Sigmoid colon (tissue), 7 donors: ENCODE measurements at regions of chr3 and their contacts with region 1.

Region 1: GRCh38 chr3:44510000-44510368 is 32.5 kb upstream of the ZNF445 start:
- DNase-seq: no peak
- H3K4me3 ChIP-seq: peak overlapping the region; percentile 81 to 93 (median 90)
- H3K27ac ChIP-seq: peak overlapping the region; percentile 83 to 95 (median 93)
- H3K4me1 ChIP-seq: peaks cover 0 to 23% (median 22%) of the 10 kb centered on the region in 4 donors
- H3K27me3 ChIP-seq: no peaks in the 10 kb centered on the region
- CTCF ChIP-seq: no peak
- EP300 ChIP-seq: no peak
- POLR2A ChIP-seq: no peak

Region 2: DNA sequence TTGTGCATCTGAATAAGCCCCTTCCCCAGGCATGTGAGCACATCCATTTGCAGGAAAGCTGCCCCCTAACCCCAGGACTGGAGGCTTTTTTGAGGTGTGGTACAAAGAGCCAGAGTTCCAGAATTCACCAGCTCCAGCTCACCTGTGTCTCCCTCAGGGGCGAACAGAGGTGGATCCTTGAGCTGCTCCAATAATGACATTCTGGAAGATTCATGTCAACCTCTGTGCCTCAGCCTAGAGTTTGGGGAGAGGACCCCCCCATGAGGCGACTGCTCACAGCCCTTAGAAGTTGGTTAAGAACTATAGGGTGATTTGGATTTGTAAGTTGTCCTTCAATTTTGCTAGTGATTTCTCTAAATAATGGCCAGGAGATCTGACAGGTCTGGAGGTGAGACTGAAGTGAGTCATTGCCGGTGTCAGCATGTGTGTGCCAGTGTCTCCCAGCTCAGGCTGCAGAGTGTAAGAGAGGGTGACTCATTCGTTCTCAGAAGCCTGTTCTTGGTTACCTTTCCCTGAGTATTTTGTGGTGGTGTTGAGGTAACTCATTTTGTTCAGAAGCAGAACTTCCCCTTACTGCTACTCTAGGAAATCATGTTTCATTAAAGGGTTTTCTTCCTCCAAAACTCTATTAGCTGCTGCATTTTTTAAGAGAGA is 405.2 kb before region 1 on chr3:
- intact Hi-C with region 1: no loop called
- DNase-seq: no peak
- H3K4me3 ChIP-seq: no peak overlapping the region
- H3K27ac ChIP-seq: no peak overlapping the region
- H3K4me1 ChIP-seq: no peaks in the 10 kb centered on the region
- H3K27me3 ChIP-seq: peaks cover 0 to 5% (median 0%) of the 10 kb centered on the region in 3 donors
- CTCF ChIP-seq: no peak
- EP300 ChIP-seq: no peak
- POLR2A ChIP-seq: no peak

Region 3: GRCh38 chr3:44323341-44323955 is 186.5 kb before region 1 on chr3:
- intact Hi-C with region 1: loop called (anchors 5 kb)
- DNase-seq: peak; percentile 80
- H3K4me3 ChIP-seq: no peak overlapping the region
- H3K27ac ChIP-seq: no peak overlapping the region
- H3K4me1 ChIP-seq: no peaks in the 10 kb centered on the region
- H3K27me3 ChIP-seq: peaks cover 0 to 3% (median under 1%) of the 10 kb centered on the region in 3 donors
- CTCF ChIP-seq: peak; percentile 56 to 73 (median 66)
- EP300 ChIP-seq: no peak
- POLR2A ChIP-seq: no peak

Region 4: DNA sequence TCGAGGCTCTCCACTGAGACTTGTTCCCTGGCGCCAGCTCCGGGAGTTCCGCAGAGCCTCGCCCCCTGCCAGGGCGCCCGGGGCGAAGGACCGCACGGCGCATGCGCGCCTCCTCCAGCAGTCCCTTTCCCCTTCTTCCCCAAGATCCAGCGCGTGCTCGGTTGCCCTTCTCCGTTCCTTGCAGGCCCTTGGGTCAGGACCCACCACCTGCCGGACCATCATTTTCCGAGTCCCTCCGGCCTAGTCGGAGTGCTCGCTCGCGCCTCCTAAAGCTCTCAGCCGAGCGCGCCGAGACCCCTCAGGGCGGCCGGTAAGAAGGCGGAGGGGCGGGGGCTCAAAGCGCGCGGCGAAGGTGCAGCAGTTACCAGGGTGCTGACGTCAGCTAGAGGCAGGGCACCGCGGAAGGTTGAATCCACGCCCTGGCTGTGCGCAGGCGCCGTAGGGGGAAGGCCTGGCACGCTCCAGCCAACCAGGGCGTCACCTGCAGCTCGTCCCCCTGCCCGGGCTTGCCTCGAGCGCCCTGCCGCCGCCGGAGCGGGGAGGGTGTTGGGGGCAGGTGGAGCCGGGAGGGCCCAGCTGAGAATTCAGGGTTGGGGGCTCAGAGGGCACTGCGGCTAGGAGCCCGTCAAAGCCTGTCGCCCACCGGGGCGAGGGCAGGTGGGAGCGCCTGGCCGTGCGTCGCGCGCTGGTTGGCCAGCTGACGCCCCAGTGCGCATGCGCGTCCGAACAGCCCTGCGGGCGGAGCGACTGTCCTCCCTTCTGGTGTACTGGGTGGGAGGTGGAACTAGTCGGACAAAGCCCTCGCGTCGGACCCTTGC is 171.8 kb before region 1 on chr3 and contains the start of gene TCAIM:
- intact Hi-C with region 1: loop called (anchors 5 kb)
- DNase-seq: peak; percentile 99
- H3K4me3 ChIP-seq: peak within 1 kb of the TSS; percentile 61 to 78 (median 69)
- H3K27ac ChIP-seq: peak within 1 kb of the TSS; percentile 90 to 97 (median 96)
- H3K4me1 ChIP-seq: peaks cover 0 to 47% (median 30%) of the 10 kb centered on the region in 4 donors
- H3K27me3 ChIP-seq: no peaks in the 10 kb centered on the region
- CTCF ChIP-seq: no peak
- EP300 ChIP-seq: peak in 1 of 4 donors; percentile 6
- POLR2A ChIP-seq: peak; percentile 94 to 95
- total RNA-seq, gene TCAIM: 30.3 to 39.3 (median 33.8) TPM

Region 5: GRCh38 chr3:44477312-44478030 is 32.5 kb before region 1 on chr3 and contains the start of gene ZNF445:
- intact Hi-C with region 1: loop called (anchors 2 kb)
- DNase-seq: peak; percentile 88
- H3K4me3 ChIP-seq: peak within 1 kb of the TSS; percentile 47 to 92 (median 82)
- H3K27ac ChIP-seq: peak within 1 kb of the TSS; percentile 72 to 87 (median 83)
- H3K4me1 ChIP-seq: peaks cover 0 to 33% (median 18%) of the 10 kb centered on the region in 4 donors
- H3K27me3 ChIP-seq: no peaks in the 10 kb centered on the region
- CTCF ChIP-seq: no peak
- EP300 ChIP-seq: no peak
- POLR2A ChIP-seq: no peak
- total RNA-seq, gene ZNF445: 7.1 to 13.3 (median 10.6) TPM

Region 6: DNA sequence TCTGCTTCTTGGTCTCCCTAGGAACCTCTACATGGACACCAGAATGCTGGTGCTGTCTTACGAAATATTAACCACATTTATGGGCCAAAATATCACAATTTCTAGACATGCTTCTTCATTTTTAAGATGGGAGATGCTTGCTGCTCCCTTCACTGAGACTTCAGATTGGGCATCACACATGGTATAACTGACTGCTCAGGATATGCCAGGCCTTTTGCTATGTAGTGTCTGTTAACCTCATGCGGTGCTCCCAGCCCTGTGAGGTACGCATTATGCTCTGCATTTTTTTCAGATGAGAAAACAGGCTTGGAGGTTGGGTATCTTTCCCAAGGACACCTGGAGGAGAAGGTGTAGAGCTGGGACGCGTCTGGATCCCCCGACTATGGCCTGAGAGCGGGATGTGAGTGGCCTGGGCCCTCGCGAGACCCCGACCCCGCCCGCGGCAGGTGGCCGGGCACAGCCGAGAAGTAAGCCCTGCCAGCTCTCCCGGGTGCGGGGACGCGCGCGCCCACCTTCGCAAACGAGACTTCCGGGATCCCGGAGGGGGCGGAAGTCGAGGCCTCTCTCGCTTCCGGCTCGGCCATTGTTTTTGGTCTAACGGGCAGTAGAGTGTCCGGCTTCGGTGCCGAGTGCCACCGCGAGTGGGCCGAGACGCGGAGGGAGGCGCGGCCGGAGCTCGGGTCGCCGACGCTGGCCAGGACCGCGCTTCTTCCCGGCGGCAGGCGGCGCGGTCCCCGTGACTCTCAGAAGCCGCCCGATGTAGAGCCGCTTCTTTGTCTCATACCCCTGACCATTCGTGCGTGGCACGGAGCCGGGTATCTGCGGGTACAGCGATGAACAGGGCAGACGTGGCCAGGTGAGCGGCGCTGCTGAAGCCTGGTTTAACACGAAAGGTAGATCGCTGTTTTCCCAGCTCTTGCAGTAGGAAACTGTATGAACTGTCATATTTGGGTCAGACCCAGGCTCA is 44.9 kb after region 1 on chr3 and contains the start of gene ZKSCAN7:
- intact Hi-C with region 1: loop called (anchors 1 kb)
- DNase-seq: peak; percentile 73
- H3K4me3 ChIP-seq: peak within 1 kb of the TSS; percentile 62 to 85 (median 78)
- H3K27ac ChIP-seq: peak within 1 kb of the TSS; percentile 71 to 81 (median 76)
- H3K4me1 ChIP-seq: peaks cover 0 to 14% (median 10%) of the 10 kb centered on the region in 4 donors
- H3K27me3 ChIP-seq: peaks cover 0 to 23% (median 0%) of the 10 kb centered on the region in 3 donors
- CTCF ChIP-seq: no peak
- EP300 ChIP-seq: no peak
- POLR2A ChIP-seq: no peak
- total RNA-seq, gene ZKSCAN7: 2.7 to 7.1 (median 5.5) TPM

Region 7: DNA sequence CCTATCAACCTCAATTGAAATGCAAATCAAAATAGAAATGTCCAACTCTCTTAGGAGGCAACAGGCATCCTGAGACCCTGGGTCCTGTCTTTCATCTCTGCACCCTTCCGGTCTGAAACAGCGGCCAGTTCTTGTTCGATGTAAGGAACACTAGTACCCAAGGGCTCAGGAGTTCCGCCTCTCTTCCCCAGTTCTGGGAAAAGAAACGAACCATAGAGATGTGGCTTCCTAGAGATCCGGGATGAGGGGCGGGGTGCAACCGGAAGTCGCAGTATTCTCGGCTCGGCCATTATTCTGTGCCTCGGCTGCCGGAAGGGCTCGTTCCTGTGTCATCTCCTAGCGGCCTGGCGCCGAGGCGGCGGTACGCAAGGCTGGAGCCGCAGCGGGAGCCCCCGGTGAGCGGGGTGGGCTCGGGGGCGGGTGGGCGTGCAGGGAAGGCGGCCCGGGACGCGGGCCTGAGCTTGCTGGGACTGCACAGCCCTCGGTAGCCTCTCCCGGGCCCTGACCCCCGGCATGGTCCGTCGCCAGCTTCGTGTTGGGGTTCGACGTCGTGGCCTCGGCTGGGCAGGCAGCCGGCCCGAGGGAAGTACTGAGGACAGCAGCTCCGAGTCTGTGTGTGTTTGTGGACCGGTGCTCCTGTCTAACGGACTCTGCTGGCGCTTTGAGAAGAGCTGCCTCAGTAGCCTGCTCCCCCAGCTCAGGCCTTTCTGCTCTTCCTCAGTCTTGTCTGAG is 114.9 kb after region 1 on chr3 and contains the start of gene ZNF197:
- intact Hi-C with region 1: loop called (anchors 2 kb)
- DNase-seq: peak; percentile 93
- H3K4me3 ChIP-seq: peak within 1 kb of the TSS; percentile 67 to 89 (median 80)
- H3K27ac ChIP-seq: peak within 1 kb of the TSS; percentile 89 to 93 (median 90)
- H3K4me1 ChIP-seq: peaks cover 0 to 34% (median 27%) of the 10 kb centered on the region in 4 donors
- H3K27me3 ChIP-seq: no peaks in the 10 kb centered on the region
- CTCF ChIP-seq: no peak
- EP300 ChIP-seq: no peak
- POLR2A ChIP-seq: no peak
- total RNA-seq, gene ZNF197: 19.1 to 30.8 (median 21.0) TPM

Region 8: DNA sequence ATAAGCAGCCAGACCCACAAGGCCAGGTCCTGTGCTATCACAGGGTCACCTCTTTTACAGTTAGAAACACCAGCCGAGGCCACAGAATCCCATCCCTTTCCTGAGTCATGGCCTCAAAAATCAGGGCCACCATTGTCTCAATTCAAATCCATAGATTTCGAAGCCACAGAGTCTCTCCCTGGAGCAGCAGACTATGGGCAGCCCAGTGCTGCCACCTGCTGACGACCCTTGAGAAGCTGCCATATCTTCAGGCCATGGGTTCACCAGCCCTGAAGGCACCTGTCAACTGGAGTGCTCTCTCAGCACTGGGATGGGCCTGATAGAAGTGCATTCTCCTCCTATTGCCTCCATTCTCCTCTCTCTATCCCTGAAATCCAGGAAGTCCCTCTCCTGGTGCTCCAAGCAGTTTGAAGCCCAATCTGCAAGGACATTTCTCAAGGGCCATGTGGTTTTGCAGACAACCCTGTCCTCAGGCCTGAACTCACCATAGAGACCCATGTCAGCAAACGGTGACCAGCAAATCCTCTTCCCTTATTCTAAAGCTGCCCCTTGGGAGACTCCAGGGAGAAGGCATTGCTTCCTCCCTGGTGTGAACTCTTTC is 404.0 kb after region 1 on chr3:
- intact Hi-C with region 1: no loop called
- DNase-seq: no peak
- H3K4me3 ChIP-seq: no peak overlapping the region
- H3K27ac ChIP-seq: no peak overlapping the region
- H3K4me1 ChIP-seq: no peaks in the 10 kb centered on the region
- H3K27me3 ChIP-seq: peaks cover 0 to 11% (median 0%) of the 10 kb centered on the region in 3 donors
- CTCF ChIP-seq: peak in 3 of 4 experiments; percentile 46 to 76 (median 55)
- EP300 ChIP-seq: no peak
- POLR2A ChIP-seq: no peak